Caco-2 (cell line): ENCODE measurements at regions of chr4 and their contacts with region 1.

Region 1: GRCh38 chr4:174522183-174523048 is at the start of gene HPGD:
- DNase-seq: peak; percentile 74 to 79
- H3K4me3 ChIP-seq: peak within 1 kb of the TSS; percentile 63
- H3K4me3 Mint-ChIP-seq: peak within 1 kb of the TSS; percentile 89
- H3K27ac Mint-ChIP-seq: peak within 1 kb of the TSS; percentile 70
- H3K4me1 ChIP-seq: peaks cover 25% of the 10 kb centered on the region
- H3K4me1 Mint-ChIP-seq: peaks cover 43% of the 10 kb centered on the region
- H3K27me3 ChIP-seq: no peaks in the 10 kb centered on the region
- H3K27me3 Mint-ChIP-seq: no peaks in the 10 kb centered on the region
- CTCF ChIP-seq: no peak
- total RNA-seq, gene HPGD: 85.5 and 91.5 TPM in 2 replicates

Region 2: DNA sequence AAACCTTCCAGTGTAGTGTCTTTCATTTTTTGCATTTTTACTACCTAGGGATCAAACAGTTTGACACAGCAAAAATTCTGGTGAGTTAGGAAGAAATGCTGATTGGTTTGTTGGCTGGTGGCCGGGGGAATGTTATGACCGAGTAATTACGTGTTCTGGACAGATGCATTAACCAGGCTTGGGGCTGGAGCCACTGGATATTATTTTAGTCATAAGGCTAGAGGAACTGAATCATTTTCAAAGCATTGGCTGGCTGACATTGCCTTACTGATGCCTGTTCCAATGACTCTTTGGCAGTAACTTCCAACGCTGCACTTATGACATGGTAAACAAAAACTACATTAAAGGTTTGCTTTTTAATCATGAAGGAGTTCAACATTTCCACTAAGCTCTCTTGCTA is 323.6 kb before region 1 on chr4:
- CTCF ChIA-PET with region 1: no interaction called
- POLR2A ChIA-PET with region 1: no interaction called
- intact Hi-C with region 1: loop called (anchors 10 kb)
- DNase-seq: no peak
- H3K4me3 ChIP-seq: no peak overlapping the region
- H3K4me3 Mint-ChIP-seq: no peak overlapping the region
- H3K27ac Mint-ChIP-seq: no peak overlapping the region
- H3K4me1 ChIP-seq: peaks cover 17% of the 10 kb centered on the region
- H3K4me1 Mint-ChIP-seq: no peaks in the 10 kb centered on the region
- H3K27me3 ChIP-seq: no peaks in the 10 kb centered on the region
- H3K27me3 Mint-ChIP-seq: no peaks in the 10 kb centered on the region
- CTCF ChIP-seq: no peak

Region 3: GRCh38 chr4:174383783-174384182 is 138.6 kb before region 1 on chr4:
- CTCF ChIA-PET with region 1: no interaction called
- POLR2A ChIA-PET with region 1: no interaction called
- intact Hi-C with region 1: loop called (anchors 1 kb)
- DNase-seq: peak; percentile 59 to 60
- H3K4me3 ChIP-seq: no peak overlapping the region
- H3K4me3 Mint-ChIP-seq: peak overlapping the region; percentile 68
- H3K27ac Mint-ChIP-seq: peak overlapping the region; percentile 94
- H3K4me1 ChIP-seq: peaks cover 77% of the 10 kb centered on the region
- H3K4me1 Mint-ChIP-seq: peaks cover 28% of the 10 kb centered on the region
- H3K27me3 ChIP-seq: no peaks in the 10 kb centered on the region
- H3K27me3 Mint-ChIP-seq: no peaks in the 10 kb centered on the region
- CTCF ChIP-seq: no peak

Region 4: GRCh38 chr4:174461466-174462106 is 60.8 kb before region 1 on chr4:
- CTCF ChIA-PET with region 1: interaction called, 3 read pairs
- POLR2A ChIA-PET with region 1: no interaction called
- intact Hi-C with region 1: loop called (anchors 1 kb)
- DNase-seq: peak; percentile 75 to 82
- H3K4me3 ChIP-seq: no peak overlapping the region
- H3K4me3 Mint-ChIP-seq: peak overlapping the region; percentile 54
- H3K27ac Mint-ChIP-seq: peak overlapping the region; percentile 58
- H3K4me1 ChIP-seq: peaks cover 50% of the 10 kb centered on the region
- H3K4me1 Mint-ChIP-seq: peaks cover 57% of the 10 kb centered on the region
- H3K27me3 ChIP-seq: no peaks in the 10 kb centered on the region
- H3K27me3 Mint-ChIP-seq: no peaks in the 10 kb centered on the region
- CTCF ChIP-seq: no peak

Region 5: GRCh38 chr4:174631901-174632758 is 109.7 kb after region 1 on chr4:
- CTCF ChIA-PET with region 1: interaction called, 6 read pairs
- POLR2A ChIA-PET with region 1: interaction called, 3 read pairs
- intact Hi-C with region 1: loop called (anchors 1 kb)
- DNase-seq: peak in 1 of 2 experiments; percentile 44
- H3K4me3 ChIP-seq: no peak overlapping the region
- H3K4me3 Mint-ChIP-seq: no peak overlapping the region
- H3K27ac Mint-ChIP-seq: no peak overlapping the region
- H3K4me1 ChIP-seq: peaks cover 6% of the 10 kb centered on the region; the same call in 1 of the 2 replicates
- H3K4me1 Mint-ChIP-seq: peaks cover 6% of the 10 kb centered on the region
- H3K27me3 ChIP-seq: no peaks in the 10 kb centered on the region
- H3K27me3 Mint-ChIP-seq: no peaks in the 10 kb centered on the region
- CTCF ChIP-seq: peak; percentile 69 to 85

Region 6: GRCh38 chr4:174813292-174813691 is 290.9 kb after region 1 on chr4:
- CTCF ChIA-PET with region 1: no interaction called
- POLR2A ChIA-PET with region 1: no interaction called
- intact Hi-C with region 1: no loop called
- DNase-seq: no peak
- H3K4me3 ChIP-seq: no peak overlapping the region
- H3K4me3 Mint-ChIP-seq: no peak overlapping the region
- H3K27ac Mint-ChIP-seq: no peak overlapping the region
- H3K4me1 ChIP-seq: no peaks in the 10 kb centered on the region
- H3K4me1 Mint-ChIP-seq: no peaks in the 10 kb centered on the region
- H3K27me3 ChIP-seq: no peaks in the 10 kb centered on the region
- H3K27me3 Mint-ChIP-seq: peaks cover 7% of the 10 kb centered on the region
- CTCF ChIP-seq: no peak